Dorsolateral prefrontal cortex (tissue), 120 donors: ENCODE measurements at regions of chr20 and their contacts with region 1.

Region 1: DNA sequence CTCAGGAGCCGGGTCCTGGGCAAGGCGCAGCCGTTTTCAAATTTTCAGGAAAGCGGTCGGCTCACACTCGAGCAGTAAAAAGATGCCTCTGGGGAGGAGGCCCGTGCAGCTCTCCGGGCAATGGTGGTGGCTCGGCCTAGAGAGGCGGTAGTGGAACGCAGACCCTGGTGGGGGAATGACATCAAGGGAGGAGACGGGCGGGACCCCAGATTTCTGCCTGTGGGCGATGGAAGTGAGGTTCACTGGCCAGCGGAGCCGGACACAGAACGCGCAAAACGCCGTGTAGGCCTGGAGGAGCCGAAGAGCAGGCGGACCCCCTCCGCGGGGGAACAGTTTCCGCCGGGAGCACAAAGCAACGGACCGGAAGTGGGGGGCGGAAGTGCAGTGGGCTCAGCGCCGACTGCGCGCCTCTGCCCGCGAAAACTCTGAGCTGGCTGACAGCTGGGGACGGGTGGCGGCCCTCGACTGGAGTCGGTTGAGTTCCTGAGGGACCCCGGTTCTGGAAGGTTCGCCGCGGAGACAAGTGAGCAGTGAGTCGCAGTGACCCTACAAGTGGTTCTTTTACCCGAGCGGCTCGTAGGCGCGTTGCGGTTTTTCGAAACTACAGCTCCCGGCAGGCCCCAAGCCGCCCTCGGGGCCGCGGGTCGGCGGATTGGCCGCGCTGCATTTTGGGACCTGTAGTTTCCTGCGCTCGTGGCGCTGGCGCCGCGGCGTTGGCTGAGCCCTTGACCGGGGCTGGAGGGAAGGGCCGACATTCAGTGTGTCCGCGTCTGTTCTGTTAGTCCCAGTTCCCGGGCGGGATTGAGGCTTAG is at the start of gene RTEL1:
- DNase-seq: peak; percentile 83 to 96 (median 91)
- H3K4me3 ChIP-seq: peak within 1 kb of the TSS; percentile 61 to 98 (median 84)
- H3K27ac ChIP-seq: peak within 1 kb of the TSS; percentile 60 to 98 (median 92)
- H3K27me3 ChIP-seq: no peaks in the 10 kb centered on the region
- CTCF ChIP-seq: peak in 31 of 56 donors; percentile 6 to 51 (median 33)
- total RNA-seq, gene RTEL1: 24.4 to 94.5 (median 44.5) TPM

Region 2: DNA sequence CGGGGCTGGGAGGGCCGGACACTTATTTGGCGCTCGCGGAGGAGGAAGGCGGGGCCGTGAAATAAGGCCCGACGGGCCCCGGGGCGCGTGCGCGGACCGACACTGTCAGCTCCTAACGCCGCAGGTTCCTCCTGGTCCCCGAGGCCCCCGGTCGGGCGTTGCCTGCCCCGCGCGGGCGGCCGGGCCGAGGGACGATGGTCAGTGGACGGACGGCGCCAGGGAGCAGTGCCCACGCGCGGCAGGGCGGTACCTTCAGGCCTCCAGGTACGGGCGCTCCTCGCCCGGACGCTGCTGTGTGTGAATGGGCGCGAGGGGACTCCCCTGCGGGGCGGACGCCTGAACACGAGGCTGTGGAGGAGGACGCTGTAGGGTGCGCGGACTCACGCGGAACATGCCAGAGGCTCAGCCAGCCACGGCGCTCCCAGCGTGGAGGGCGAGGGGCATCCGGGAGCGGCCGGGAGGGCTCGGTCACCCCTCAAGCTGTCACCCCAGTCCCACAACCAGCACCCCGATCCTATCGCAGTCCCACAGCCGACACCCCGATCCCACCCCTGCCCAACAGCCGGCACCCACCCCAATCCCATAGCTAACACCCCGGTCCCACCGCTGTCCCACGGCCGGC is 30.9 kb before region 1 on chr20:
- intact Hi-C with region 1: loop called (anchors 1 to 2 kb)
- DNase-seq: peak; percentile 83 to 94 (median 87)
- H3K4me3 ChIP-seq: peak overlapping the region; percentile 52 to 100 (median 97)
- H3K27ac ChIP-seq: peak overlapping the region; percentile 40 to 99 (median 97)
- H3K27me3 ChIP-seq: no peaks in the 10 kb centered on the region
- CTCF ChIP-seq: peak in 4 of 56 donors; percentile 10 to 34 (median 11)

Region 3: DNA sequence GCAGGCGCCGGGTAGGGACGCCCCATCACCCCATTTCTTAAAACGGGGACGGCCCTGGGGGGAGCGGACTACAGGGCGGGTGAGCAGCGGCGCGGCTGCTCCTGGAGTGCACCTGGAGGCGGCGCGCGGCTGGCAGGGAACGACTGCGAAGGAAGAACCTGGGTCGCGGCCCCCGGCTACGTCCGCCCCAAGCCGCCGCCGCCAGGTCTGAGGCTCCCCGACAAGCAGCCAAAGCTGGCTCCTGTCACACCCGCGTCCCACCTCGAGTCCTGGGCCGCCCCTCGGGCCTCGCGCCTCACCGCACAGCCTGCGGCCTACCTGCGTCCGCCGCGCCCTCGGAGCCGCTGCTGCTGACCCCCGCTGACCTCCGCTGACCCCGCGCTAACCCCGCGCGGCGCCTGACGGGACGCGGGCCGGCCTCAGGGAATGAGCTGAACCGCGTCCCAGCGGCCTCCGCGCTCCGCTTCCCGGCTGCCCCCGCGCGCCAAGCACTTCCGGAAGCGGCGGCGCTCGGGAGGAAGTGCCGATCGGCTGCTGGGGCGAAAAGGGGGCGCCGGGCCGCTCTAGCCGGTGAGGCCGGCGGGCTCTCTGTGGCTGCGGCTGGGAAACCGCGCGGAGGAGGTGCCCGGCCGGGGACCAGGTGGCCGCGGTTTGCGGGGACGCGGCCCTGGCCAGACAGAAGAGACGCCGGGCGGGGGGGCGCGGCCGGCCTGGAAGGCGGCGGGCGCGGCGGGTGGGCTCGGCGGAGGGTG is 49.6 kb after region 1 on chr20 and contains the starts of genes ARFRP1 and ZGPAT:
- intact Hi-C with region 1: loop called (anchors 1 to 5 kb)
- DNase-seq: peak; percentile 88 to 97 (median 90)
- H3K4me3 ChIP-seq: peak within 1 kb of the TSS; percentile 72 to 100 (median 94)
- H3K27ac ChIP-seq: peak within 1 kb of the TSS in 55 of 59 donors; percentile 30 to 94 (median 83)
- H3K27me3 ChIP-seq: no peaks in the 10 kb centered on the region
- CTCF ChIP-seq: peak in 31 of 56 donors; percentile 5 to 59 (median 26)
- total RNA-seq, gene ARFRP1: 37.8 to 65.5 (median 48.4) TPM
- total RNA-seq, gene ZGPAT: 18.4 to 46.9 (median 28.4) TPM